ENCODE measurements at regions of chr6 and their contacts with region 1.

Region 1: GRCh38 chr6:107459283-107460082 is at the start of gene PDSS2:
- DNase-seq: peak; percentile 89 to 95
- H3K4me3 ChIP-seq: peak within 1 kb of the TSS; percentile 90 to 100 (median 95)
- H3K27ac ChIP-seq: peak within 1 kb of the TSS; percentile 70
- H3K4me1 ChIP-seq: peaks cover 0 to 3% (median 1%) of the 10 kb centered on the region in 4 experiments; a peak in 2 of 7 replicates
- H3K27me3 ChIP-seq: no peaks in the 10 kb centered on the region
- CTCF ChIP-seq: peak; percentile 52 to 64 (median 56)
- EP300 ChIP-seq: no peak
- POLR2A ChIP-seq: peak; percentile 58 to 85
- RAD21 ChIP-seq: peak; percentile 43; a peak in 3 of 4 replicates
- total RNA-seq, gene PDSS2: 15.6 and 16.1 TPM in 2 replicates

Region 2: GRCh38 chr6:107489636-107490565 is 30.4 kb after region 1 on chr6 and contains the start of gene SOBP:
- CTCF ChIA-PET with region 1: interaction called, 15 read pairs
- POLR2A ChIA-PET with region 1: interaction called, 26 read pairs
- DNase-seq: peak in 1 of 2 experiments; percentile 73
- H3K4me3 ChIP-seq: peak within 1 kb of the TSS; percentile 63 to 91 (median 86)
- H3K27ac ChIP-seq: no peak within 1 kb of the TSS
- H3K4me1 ChIP-seq: peaks cover 0 to 14% (median 10%) of the 10 kb centered on the region in 4 experiments; a peak in 6 of 7 replicates
- H3K27me3 ChIP-seq: peaks cover 10 to 43% (median 27%) of the 10 kb centered on the region in 4 experiments
- CTCF ChIP-seq: no peak
- EP300 ChIP-seq: no peak
- POLR2A ChIP-seq: no peak
- RAD21 ChIP-seq: no peak
- total RNA-seq, gene SOBP: 6.2 and 7.4 TPM in 2 replicates

Measured in H1 (cell line).